ENCODE measurements at regions of chr14 and their contacts with region 1.

Region 1: DNA sequence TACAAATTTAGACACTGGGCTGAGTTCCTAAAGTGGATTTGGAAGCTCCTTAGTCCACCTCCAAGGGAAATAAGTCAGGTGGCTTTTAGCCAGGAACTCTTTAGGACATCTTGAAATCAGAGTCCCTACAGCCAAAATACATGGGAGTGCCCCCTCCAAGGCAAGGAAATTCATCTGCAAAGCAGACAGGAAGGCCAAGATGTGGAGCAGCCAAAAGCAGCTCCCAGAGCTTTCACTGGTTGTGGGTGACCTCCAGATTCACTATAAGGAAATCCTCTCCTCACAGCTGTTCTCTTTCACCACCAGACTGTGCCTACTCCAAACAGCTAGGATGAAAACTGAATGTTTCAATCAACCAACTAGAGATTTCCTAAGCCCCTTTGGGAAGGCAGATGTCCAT is 6.6 kb downstream of the TTC9 start:
- DNase-seq: no peak
- H3K4me3 ChIP-seq: no peak overlapping the region
- CTCF ChIP-seq: no peak

Region 2: DNA sequence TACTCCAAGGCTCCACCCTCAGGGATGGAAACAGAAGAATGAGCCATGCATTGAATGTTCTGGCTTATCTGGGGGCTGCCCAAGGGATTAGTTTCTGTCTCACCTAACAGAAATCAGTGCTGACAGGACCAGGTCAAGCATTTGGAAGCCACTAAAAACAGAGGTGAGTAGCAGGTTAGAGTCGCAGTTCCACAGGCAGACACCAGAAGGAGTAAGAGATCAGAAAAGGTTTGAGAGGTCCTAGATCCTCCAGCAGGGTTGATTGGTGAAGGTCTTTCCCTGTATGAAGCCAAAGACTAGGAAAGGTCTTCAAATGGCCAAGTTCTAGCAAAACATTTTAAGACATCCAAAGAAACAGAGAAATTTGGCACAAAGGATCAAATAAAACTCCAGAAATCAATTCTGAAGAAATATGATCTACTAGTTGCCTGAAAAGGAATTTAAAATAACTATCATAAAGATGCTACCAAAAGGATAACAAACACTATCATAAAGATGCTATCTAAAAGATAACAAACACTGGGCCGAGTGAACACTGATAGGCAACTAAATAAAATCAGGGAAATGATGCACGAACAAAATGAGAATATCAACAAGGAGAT is 26.1 kb before region 1 on chr14:
- in situ Hi-C with region 1: no loop called
- DNase-seq: no peak
- H3K4me3 ChIP-seq: no peak overlapping the region
- CTCF ChIP-seq: peak; percentile 94

Region 3: DNA sequence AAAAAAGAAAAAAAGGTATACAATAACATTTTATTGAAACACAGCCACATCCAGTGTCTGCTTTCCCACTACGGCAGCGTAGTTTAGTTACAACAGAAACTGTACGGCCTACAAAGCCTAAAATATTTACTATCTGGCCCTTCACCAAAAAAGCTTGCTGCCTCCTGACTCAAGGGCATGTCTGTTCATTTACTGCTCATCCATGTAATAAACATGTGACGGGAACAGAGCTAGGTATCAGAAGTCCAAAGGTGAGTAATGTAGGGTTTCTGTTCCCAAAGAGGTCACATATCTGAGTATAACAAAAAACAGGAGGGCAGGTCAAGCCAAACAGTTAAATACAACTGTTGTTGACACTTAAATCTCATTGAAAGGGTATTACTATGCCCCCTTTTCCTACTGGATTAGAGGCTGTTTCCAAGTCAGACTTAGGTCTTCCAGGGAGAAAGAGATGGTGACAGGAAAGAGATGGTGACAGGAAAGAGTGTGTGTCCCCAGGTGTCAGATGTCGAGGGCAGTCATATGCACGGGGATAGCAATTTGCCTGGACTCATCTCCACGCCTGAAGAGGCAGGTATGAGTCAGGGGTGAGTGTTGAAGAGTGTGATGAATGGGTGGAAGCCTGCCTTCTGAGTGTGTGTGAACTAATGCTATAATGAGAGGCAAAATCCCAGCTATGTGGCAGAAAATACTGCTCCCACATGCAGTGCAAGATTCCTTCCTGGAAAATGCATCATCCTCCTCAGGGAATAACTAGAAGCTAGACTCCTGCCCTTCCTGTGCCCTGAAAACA is 83.3 kb after region 1 on chr14:
- in situ Hi-C with region 1: loop called (anchors 5 kb)
- DNase-seq: no peak
- H3K4me3 ChIP-seq: no peak overlapping the region
- CTCF ChIP-seq: no peak

Region 4: GRCh38 chr14:71438684-71439083 is 790.3 kb after region 1 on chr14:
- in situ Hi-C with region 1: no loop called
- DNase-seq: peak; percentile 35
- H3K4me3 ChIP-seq: no peak overlapping the region
- CTCF ChIP-seq: no peak

Measured in astrocyte of the cerebellum (primary cell).